ENCODE measurements at regions of chr7 and their contacts with region 1.

Region 1: DNA sequence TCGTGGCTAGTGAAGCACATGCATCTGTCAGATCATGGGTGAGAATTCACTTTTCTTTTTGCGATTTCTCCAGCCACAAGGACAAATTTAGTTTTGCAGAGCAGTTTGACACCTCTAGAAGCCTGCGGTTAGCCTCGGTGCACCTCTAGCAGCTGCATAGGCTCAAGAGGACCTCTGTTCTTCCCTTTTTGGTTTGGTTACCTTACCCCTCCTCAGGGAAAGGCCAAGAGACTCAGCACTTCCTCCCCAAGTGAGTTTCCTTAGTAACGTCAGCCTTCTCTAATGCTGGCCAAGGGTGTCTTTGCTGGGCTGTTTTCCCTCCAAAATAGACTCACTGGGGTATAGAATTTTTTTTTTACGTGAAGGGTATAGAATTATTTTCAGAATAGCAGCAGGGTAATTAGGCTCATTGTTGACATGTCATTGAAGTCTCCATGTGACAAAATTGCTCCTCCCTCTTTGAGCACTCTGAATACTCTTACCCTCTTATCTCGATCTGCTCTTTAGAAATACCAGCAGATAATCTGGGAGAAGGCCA is 97.8 kb downstream of the AUTS2 start:
- DNase-seq: no peak
- ATAC-seq: no peak
- H3K4me3 ChIP-seq: no peak overlapping the region
- H3K27ac ChIP-seq: no peak overlapping the region
- H3K4me1 ChIP-seq: no peaks in the 10 kb centered on the region
- H3K27me3 ChIP-seq: peaks cover 0 to 2% of the 10 kb centered on the region in 2 experiments; a peak in 1 of 5 replicates
- CTCF ChIP-seq: no peak
- EP300 ChIP-seq: no peak
- POLR2A ChIP-seq: no peak
- RAD21 ChIP-seq: no peak

Region 2: GRCh38 chr7:70925411-70926115 is 1229.4 kb after region 1 on chr7:
- CTCF ChIA-PET with region 1: no interaction called
- POLR2A ChIA-PET with region 1: no interaction called
- in situ Hi-C with region 1: loop called (anchors 25 kb)
- intact Hi-C with region 1: no loop called
- DNase-seq: no peak
- ATAC-seq: no peak
- H3K4me3 ChIP-seq: no peak overlapping the region
- H3K27ac ChIP-seq: no peak overlapping the region
- H3K4me1 ChIP-seq: no peaks in the 10 kb centered on the region
- H3K27me3 ChIP-seq: peaks cover 0 to 4% of the 10 kb centered on the region in 2 experiments; a peak in 1 of 5 replicates
- CTCF ChIP-seq: no peak
- EP300 ChIP-seq: no peak
- POLR2A ChIP-seq: no peak
- RAD21 ChIP-seq: no peak

Measured in K562 (cell line).